Heart left ventricle (tissue), 16 donors: ENCODE measurements at regions of chr20 and their contacts with region 1.

Region 1: DNA sequence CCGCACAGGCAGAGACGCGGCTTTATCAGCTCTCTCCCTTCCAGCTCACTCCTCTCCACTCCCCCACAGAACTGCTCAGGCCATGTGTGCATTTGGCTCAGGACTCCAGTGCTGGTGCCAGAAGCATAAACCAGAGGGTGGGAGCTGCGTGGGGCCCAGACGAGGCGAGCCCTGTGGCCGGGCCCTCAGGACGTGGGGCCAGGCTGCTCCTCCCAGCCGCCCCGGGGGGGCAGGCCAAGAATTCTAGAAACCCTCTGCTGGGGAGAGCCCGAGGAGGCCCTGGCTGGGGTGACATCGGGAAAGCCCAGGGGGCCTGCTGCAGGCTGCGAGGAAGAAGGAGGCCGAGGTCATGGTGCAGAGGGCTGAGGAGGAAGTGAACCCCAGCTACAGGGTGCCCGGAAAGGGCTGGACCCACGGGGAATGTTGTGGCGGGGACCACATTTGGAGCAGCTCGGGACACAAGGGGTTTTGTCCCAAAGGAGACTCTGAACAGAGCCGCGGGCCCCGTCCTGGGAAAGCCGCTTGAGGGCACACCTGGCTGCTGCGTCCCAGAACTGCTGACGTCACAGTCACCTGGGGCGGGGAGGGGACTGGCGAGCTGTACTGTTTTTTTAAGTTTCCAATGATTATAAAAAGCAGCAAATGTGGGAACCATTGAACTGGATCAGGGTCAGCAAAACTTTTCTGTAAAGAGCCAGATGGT is 107.1 kb downstream of the BANF2 start:
- DNase-seq: peak; percentile 85 to 90 (median 89)
- ATAC-seq: peak; percentile 88 to 94 (median 93)
- H3K4me3 ChIP-seq: peak overlapping the region in 6 of 12 donors; percentile 4 to 29 (median 17)
- H3K27ac ChIP-seq: peak overlapping the region; percentile 11 to 84 (median 76)
- H3K4me1 ChIP-seq: peaks cover 5 to 47% (median 37%) of the 10 kb centered on the region in 12 donors
- H3K27me3 ChIP-seq: no peaks in the 10 kb centered on the region
- CTCF ChIP-seq: peak in 1 of 12 donors; percentile 11
- POLR2A ChIP-seq: no peak

Region 2: DNA sequence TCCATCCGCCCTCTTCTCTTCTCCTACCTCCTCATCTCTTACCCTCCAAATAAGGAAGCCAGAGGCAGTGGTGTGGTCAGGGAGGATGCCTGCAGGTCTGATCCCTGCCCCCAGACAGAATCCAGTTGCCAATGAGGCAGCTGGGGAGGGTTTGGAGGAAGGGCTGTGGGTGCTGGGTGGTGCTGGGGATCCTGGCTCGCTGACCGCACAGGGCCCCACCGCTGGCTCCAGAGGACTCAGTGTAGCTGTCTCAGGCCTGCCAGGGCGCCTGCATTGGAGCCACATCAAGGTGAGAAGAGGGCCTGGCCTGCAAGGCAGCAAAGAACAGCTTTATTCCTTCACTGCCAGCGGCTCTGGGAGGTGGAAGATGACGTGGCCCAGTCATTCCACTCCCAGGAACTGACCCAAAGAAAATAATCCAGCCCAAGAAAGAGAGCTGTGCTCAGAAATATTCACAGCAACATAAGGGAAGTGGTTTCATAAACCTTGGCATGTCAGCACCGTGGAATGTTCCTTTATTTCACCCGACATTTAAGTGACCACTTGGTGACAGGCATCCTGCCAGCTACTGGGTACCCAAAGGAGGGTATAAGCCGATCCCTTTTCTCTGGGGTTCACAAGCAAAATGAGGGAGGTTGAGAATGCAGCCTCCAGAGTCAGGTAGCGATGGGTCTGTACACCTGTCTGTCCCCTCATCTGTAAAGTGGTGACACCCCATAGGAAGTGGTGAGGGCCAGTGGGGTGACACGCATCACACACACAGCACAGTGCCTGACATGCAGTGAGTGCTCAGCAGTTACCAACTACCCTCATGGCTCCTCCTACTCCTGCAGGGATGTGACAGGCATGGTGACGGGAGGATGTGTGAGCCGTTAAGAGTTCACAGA is 36.6 kb after region 1 on chr20:
- intact Hi-C with region 1: loop called in 2 of 10 experiments (anchors 5 kb)
- DNase-seq: peak; percentile 60 to 73 (median 71)
- ATAC-seq: peak in 3 of 4 donors; percentile 67 to 85 (median 77)
- H3K4me3 ChIP-seq: no peak overlapping the region
- H3K27ac ChIP-seq: peak overlapping the region in 11 of 12 donors; percentile 44 to 87 (median 72)
- H3K4me1 ChIP-seq: peaks cover 4 to 51% (median 25%) of the 10 kb centered on the region in 12 donors
- H3K27me3 ChIP-seq: no peaks in the 10 kb centered on the region
- CTCF ChIP-seq: no peak
- POLR2A ChIP-seq: no peak

Region 3: DNA sequence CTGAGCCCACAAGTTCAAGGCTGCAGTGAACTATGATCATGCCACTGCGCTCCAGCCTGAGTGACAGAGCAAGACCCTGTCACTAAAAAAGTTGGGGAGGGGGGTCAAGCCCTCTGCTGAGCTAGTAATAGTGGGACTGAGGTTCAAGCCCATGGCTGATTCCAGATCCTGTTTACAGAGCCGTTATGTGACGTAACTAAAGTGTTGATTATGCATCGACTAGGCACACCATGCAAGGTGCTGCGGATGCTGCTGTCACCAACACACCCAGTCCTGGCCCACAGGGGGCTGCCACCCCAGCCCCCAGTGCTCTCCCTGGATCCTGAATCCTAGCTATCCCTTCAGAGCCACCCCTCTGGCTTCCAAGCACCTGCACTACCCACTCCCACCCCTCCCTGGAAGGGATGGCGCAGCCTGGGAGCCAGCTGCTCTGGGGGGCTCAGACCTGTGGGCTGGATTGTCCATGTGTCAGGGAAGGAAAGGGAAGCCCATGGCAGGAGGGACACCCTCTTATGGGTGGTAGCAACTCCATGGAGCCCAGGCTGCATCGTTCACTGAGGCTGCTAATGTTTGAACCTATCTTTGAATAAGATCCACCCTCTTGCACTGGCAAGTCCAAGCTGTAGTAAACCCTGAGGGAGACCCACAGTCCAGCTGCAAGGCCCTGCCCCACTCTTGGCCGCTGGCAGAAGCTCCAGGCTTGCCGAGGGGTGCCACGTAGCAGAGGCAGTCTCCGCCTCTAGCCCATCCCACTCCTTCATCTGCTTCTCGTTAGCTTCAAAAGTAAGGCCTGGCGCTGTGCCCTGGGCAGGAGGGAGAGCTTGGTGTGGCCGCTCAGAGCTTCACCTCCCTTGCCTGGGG is 66.8 kb after region 1 on chr20:
- intact Hi-C with region 1: loop called in 1 of 10 experiments (anchors 5 kb)
- DNase-seq: peak; percentile 79 to 92 (median 88)
- ATAC-seq: peak; percentile 55 to 88 (median 79)
- H3K4me3 ChIP-seq: no peak overlapping the region
- H3K27ac ChIP-seq: peak overlapping the region in 5 of 12 donors; percentile 1 to 70 (median 27)
- H3K4me1 ChIP-seq: peaks cover 2 to 47% (median 26%) of the 10 kb centered on the region in 12 donors
- H3K27me3 ChIP-seq: peaks cover 0 to 5% (median 0%) of the 10 kb centered on the region in 9 donors
- CTCF ChIP-seq: no peak
- POLR2A ChIP-seq: no peak